ENCODE measurements at regions of chr3 and their contacts with region 1.

Region 1: DNA sequence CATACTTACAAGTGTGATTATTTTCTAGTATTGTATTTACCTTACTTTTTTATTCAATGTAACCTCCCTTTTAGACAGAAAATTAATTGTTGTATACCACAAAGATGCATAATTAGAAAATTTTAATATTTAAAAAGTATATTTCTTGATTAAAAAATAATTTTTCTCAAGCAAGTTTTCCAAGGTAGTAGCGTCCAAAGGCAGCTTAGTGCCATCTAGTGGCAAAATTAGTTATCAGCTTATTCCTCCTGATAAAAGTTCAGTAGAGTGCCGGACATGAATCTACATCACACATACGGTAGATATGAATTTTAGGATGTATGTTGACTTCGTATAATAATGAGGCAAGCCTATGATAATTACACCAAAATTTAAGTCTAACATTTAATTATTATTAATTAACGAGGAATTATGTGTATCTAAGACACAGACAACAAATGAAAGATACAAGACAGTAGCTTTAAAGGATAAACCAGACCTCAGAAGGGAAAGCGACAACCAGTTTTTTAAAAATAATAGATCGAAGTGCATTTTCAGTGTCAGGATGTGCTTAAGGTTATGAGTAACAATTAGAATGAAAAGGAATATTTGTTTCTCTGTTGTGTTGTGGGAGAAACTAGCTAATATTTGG is 405.9 kb downstream of the ROBO1 start:
- DNase-seq: peak; percentile 14
- CTCF ChIP-seq: peak; percentile 71

Region 2: DNA sequence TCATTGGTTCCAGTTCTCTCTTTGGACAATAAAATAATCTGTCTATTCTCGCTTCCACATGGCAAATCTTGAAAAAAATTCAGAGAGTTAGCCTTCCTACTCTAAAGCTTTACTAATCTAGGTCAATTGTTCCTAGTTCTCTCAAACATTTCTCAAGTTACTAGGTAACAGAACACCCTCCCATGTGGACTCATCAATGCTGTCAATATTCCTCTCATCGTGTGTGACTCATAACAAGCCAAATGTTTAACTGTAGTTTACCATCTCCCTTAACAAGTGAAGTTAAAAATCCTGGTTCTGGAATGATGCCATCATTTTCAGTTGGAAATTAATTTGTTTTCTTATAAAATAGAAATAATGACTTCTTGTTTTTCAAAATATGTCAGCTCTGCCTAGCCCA is 32.7 kb before region 1 on chr3:
- CTCF ChIA-PET with region 1: no interaction called
- POLR2A ChIA-PET with region 1: no interaction called
- DNase-seq: no peak
- CTCF ChIP-seq: no peak

Region 3: DNA sequence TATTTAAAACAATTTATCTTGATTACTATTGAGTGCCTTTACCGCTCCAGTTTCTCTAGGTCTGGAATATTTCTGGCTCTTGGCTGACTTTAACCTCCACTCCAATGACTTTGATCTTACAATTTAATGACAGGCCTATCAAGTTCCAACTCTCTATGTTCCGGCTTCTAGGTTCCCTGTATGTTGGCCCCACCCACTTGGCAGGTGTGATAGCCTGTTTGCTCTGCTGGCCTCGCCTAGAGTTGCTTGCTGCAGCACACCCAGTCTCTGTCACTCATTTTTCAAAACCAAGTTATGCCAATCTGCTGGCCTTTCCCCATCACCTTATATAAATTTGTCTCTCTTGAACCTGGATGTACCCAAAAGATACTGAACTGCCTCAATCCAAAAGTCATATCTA is 22.0 kb before region 1 on chr3:
- CTCF ChIA-PET with region 1: no interaction called
- POLR2A ChIA-PET with region 1: no interaction called
- DNase-seq: no peak
- CTCF ChIP-seq: no peak

Region 4: DNA sequence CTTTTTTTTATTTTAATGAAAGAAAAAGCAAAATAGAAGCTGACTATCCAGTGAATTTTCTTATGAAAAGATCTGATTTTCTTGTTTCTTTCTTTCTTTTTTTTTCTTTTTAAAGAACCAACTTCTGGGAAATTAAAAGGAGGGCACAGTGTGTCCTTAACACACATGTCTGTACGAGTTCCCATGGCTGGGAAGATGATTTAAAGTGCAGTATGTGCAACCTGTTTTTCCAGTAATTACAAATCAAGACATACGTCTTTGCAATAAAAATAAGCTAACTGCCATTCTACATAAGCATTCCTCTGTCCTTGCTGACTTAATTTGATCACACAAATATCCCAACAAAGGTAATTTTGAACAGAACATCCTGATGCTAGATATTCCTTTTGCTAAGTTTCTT is 10.2 kb before region 1 on chr3:
- CTCF ChIA-PET with region 1: interaction called, 10 read pairs
- POLR2A ChIA-PET with region 1: no interaction called
- DNase-seq: no peak
- CTCF ChIP-seq: no peak